Naive thymus-derived CD4-positive, alpha-beta T cell (primary cell): ENCODE measurements at regions of chr19 and their contacts with region 1.

Region 1: GRCh38 chr19:48646001-48646721 is at the start of gene CA11:
- DNase-seq: peak; percentile 89 to 97 (median 93)
- ATAC-seq: peak; percentile 94
- H3K4me3 ChIP-seq: peak within 1 kb of the TSS; percentile 94
- H3K4me3 Mint-ChIP-seq: peak within 1 kb of the TSS; percentile 86 to 99 (median 94)
- H3K27ac ChIP-seq: peak within 1 kb of the TSS; percentile 79
- H3K27ac Mint-ChIP-seq: peak within 1 kb of the TSS; percentile 87 to 98 (median 94)
- H3K4me1 ChIP-seq: peaks cover 21% of the 10 kb centered on the region in 2 donors
- H3K4me1 Mint-ChIP-seq: peaks cover 25 to 60% (median 44%) of the 10 kb centered on the region in 7 donors
- H3K27me3 ChIP-seq: no peaks in the 10 kb centered on the region
- H3K27me3 Mint-ChIP-seq: peaks cover 0 to 8% (median 0%) of the 10 kb centered on the region in 5 donors
- total RNA-seq, gene CA11: 7.5 to 20.5 (median 12.5) TPM

Region 2: DNA sequence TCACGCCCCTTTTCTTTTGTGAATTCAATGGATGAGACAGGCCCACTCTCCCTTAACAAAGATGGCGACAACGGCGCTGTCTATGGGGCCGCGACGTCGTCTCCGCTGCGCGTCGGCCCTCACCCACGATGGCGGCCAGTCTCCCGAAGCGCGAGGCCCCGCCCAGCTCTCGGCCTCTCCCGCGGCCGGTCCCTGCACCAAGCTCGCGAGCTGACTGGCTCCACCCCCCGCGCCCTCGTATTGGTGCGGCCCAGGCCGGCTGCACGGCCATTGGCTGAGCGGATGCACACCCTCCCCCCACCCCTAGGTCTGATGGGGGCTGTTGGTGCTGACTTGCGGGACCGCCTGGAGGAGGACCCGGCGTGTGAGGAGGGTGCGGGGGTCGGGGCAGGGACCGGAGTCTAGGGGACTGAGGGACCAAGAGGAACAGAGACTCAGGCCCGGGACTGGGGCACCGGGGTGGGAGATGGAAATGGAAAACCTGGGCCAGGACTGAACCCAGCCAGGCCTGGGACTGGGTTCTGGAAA is 22.0 kb before region 1 on chr19:
- CTCF ChIA-PET with region 1: interaction called, 6 read pairs
- POLR2A ChIA-PET with region 1: interaction called, 19 read pairs
- intact Hi-C with region 1: loop called in 1 of 2 experiments (anchors 1 kb)
- DNase-seq: peak; percentile 83 to 97 (median 87)
- ATAC-seq: peak; percentile 86
- H3K4me3 ChIP-seq: peak overlapping the region; percentile 29
- H3K4me3 Mint-ChIP-seq: peak overlapping the region; percentile 76 to 98 (median 88)
- H3K27ac ChIP-seq: peak overlapping the region; percentile 73
- H3K27ac Mint-ChIP-seq: peak overlapping the region; percentile 86 to 99 (median 92)
- H3K4me1 ChIP-seq: peaks cover 14 to 24% of the 10 kb centered on the region in 2 donors
- H3K4me1 Mint-ChIP-seq: peaks cover 31 to 51% (median 44%) of the 10 kb centered on the region in 7 donors
- H3K27me3 ChIP-seq: no peaks in the 10 kb centered on the region
- H3K27me3 Mint-ChIP-seq: no peaks in the 10 kb centered on the region

Region 3: DNA sequence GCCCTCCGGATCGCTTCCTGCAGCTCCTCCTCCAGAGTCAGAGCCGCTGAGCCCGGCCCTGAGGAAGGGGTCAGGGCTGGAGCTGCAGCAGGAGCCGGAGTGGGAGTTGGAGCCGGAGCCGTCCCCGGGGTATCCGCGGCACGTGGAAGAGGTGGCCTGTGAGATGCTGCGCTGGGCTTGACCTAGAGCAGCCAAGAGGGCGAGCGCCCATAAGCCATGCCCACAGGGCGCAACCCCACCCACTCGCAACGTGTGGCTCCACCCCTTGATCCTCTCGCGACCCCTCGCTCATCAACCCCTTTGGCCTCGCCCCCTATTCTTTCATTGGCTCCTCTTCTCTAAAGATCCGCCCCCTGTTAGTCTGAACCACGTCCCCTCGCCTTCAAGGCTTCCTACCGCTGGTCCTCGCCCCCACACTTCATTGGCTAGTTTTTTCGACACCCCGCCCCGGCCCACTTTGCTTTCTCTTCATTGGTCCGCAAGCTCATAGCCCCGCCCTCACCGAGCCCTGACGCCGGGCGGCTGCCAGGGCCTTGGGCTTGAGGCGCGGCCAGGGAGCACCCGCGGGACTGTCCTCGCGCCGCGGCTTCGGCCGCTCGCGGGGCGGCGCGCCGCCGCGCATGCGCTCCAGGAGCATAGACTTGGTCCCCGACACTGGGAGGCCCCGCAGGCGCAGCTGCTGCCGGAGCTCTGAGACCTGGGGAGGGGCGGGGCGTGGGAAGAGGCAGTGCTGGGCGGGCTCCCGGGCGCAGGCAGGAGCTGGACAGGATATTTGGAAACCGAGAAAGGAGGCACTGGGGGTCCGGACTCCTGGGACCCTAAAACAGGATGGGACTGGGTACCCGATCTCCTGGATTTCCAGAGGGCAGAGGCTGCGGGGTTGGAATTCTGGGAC is 68.0 kb after region 1 on chr19:
- CTCF ChIA-PET with region 1: interaction called, 5 read pairs
- POLR2A ChIA-PET with region 1: interaction called, 9 read pairs
- intact Hi-C with region 1: loop called in 1 of 2 experiments (anchors 1 kb)
- DNase-seq: peak; percentile 92 to 97 (median 97)
- ATAC-seq: peak; percentile 96
- H3K4me3 ChIP-seq: peak overlapping the region; percentile 95
- H3K4me3 Mint-ChIP-seq: peak overlapping the region; percentile 82 to 92 (median 88)
- H3K27ac ChIP-seq: peak overlapping the region; percentile 79
- H3K27ac Mint-ChIP-seq: peak overlapping the region; percentile 16 to 90 (median 81)
- H3K4me1 ChIP-seq: peaks cover 11 to 12% of the 10 kb centered on the region in 2 donors
- H3K4me1 Mint-ChIP-seq: peaks cover 9 to 24% (median 20%) of the 10 kb centered on the region in 7 donors
- H3K27me3 ChIP-seq: no peaks in the 10 kb centered on the region
- H3K27me3 Mint-ChIP-seq: no peaks in the 10 kb centered on the region

Region 4: GRCh38 chr19:48835734-48836088 is 189.6 kb after region 1 on chr19:
- CTCF ChIA-PET with region 1: interaction called, 5 read pairs
- POLR2A ChIA-PET with region 1: no interaction called
- intact Hi-C with region 1: loop called (anchors 1 to 2 kb)
- DNase-seq: peak; percentile 81 to 93 (median 89)
- ATAC-seq: peak; percentile 95
- H3K4me3 ChIP-seq: peak overlapping the region; percentile 53
- H3K4me3 Mint-ChIP-seq: peak overlapping the region; percentile 85 to 94 (median 90)
- H3K27ac ChIP-seq: peak overlapping the region; percentile 54
- H3K27ac Mint-ChIP-seq: peak overlapping the region; percentile 48 to 96 (median 86)
- H3K4me1 ChIP-seq: peaks cover 12 to 16% of the 10 kb centered on the region in 2 donors
- H3K4me1 Mint-ChIP-seq: peaks cover 16 to 25% (median 23%) of the 10 kb centered on the region in 7 donors
- H3K27me3 ChIP-seq: peaks cover 0 to 5% of the 10 kb centered on the region in 2 donors
- H3K27me3 Mint-ChIP-seq: peaks cover 0 to 11% (median 0%) of the 10 kb centered on the region in 5 donors

Region 5: DNA sequence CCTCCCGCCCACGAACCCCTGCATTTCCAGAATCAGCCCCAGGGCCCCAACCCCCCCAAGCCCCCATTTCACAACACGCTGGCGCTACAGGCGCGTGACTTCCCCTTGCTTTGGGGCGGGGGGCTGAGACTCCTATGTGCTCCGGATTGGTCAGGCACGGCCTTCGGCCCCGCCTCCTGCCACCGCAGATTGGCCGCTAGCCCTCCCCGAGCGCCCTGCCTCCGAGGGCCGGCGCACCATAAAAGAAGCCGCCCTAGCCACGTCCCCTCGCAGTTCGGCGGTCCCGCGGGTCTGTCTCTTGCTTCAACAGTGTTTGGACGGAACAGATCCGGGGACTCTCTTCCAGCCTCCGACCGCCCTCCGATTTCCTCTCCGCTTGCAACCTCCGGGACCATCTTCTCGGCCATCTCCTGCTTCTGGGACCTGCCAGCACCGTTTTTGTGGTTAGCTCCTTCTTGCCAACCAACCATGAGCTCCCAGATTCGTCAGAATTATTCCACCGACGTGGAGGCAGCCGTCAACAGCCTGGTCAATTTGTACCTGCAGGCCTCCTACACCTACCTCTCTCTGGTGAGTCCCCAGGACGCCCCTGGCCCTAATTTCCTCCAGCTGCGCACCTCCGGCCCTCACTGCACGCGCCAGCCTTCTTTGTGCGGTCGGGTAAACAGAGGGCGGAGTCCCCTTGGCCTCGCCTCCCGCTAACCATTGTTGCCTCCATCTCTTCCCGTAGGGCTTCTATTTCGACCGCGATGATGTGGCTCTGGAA is 319.1 kb after region 1 on chr19 and contains the start of gene FTL:
- CTCF ChIA-PET with region 1: no interaction called
- POLR2A ChIA-PET with region 1: interaction called, 4 read pairs
- intact Hi-C with region 1: loop called (anchors 2 to 5 kb)
- DNase-seq: peak; percentile 77 to 93 (median 84)
- ATAC-seq: peak; percentile 85
- H3K4me3 ChIP-seq: peak within 1 kb of the TSS; percentile 86
- H3K4me3 Mint-ChIP-seq: peak within 1 kb of the TSS; percentile 94 to 100 (median 99)
- H3K27ac ChIP-seq: peak within 1 kb of the TSS; percentile 73
- H3K27ac Mint-ChIP-seq: peak within 1 kb of the TSS; percentile 93 to 100 (median 97)
- H3K4me1 ChIP-seq: peaks cover 30 to 37% of the 10 kb centered on the region in 2 donors
- H3K4me1 Mint-ChIP-seq: peaks cover 42 to 69% (median 62%) of the 10 kb centered on the region in 7 donors
- H3K27me3 ChIP-seq: no peaks in the 10 kb centered on the region
- H3K27me3 Mint-ChIP-seq: no peaks in the 10 kb centered on the region
- total RNA-seq, gene FTL: 888 to 1,929 (median 1,286) TPM